ENCODE measurements at regions of chr5 and their contacts with region 1.

Region 1: GRCh38 chr5:88746438-88746882 is 136.5 kb downstream of the MEF2C start:
- DNase-seq: peak; percentile 76
- ATAC-seq: peak; percentile 87
- H3K4me3 ChIP-seq: no peak overlapping the region
- H3K27ac ChIP-seq: peak overlapping the region; percentile 76
- H3K4me1 ChIP-seq: peaks cover 23% of the 10 kb centered on the region; the same call in 1 of the 2 replicates
- H3K27me3 ChIP-seq: no peaks in the 10 kb centered on the region
- CTCF ChIP-seq: no peak
- EP300 ChIP-seq: no peak
- POLR2A ChIP-seq: no peak
- RAD21 ChIP-seq: no peak

Region 2: GRCh38 chr5:88761269-88761850 is 14.9 kb after region 1 on chr5:
- CTCF ChIA-PET with region 1: interaction called, 6 read pairs
- POLR2A ChIA-PET with region 1: interaction called, 4 read pairs
- RAD21 ChIA-PET with region 1: interaction called, 8 read pairs
- SMC1A ChIA-PET with region 1: interaction called, 30 read pairs
- in situ Hi-C with region 1: no loop called
- intact Hi-C with region 1: no loop called
- DNase-seq: no peak
- ATAC-seq: peak; percentile 67
- H3K4me3 ChIP-seq: no peak overlapping the region
- H3K27ac ChIP-seq: peak overlapping the region; percentile 17; the same call in 1 of the 2 replicates
- H3K4me1 ChIP-seq: peaks cover 11% of the 10 kb centered on the region
- H3K27me3 ChIP-seq: no peaks in the 10 kb centered on the region
- CTCF ChIP-seq: no peak
- EP300 ChIP-seq: no peak
- POLR2A ChIP-seq: no peak
- RAD21 ChIP-seq: no peak

Region 3: DNA sequence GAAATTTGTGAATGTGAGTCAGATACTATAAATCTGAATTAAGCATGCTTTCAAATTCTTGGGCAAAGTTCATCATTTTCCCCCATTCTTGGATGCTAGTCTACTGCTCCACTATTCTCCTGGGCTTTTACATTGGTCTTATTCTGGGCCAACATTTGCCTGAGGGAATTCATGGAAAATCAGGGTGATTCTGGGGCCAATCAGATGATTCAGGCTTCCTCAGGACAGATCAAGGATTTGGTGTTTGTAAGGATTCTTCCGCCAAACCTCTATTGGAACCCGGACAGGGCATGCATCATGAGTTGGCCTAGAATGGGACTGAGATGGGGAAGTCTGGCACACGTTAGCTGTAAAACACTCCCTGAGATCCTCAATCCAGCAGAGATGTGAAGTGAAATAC is 22.7 kb after region 1 on chr5:
- CTCF ChIA-PET with region 1: interaction called, 3 read pairs
- POLR2A ChIA-PET with region 1: no interaction called
- RAD21 ChIA-PET with region 1: interaction called, 4 read pairs
- SMC1A ChIA-PET with region 1: interaction called, 14 read pairs
- in situ Hi-C with region 1: no loop called
- intact Hi-C with region 1: no loop called
- DNase-seq: no peak
- ATAC-seq: no peak
- H3K4me3 ChIP-seq: no peak overlapping the region
- H3K27ac ChIP-seq: no peak overlapping the region
- H3K4me1 ChIP-seq: peaks cover 3% of the 10 kb centered on the region; the same call in 1 of the 2 replicates
- H3K27me3 ChIP-seq: no peaks in the 10 kb centered on the region
- CTCF ChIP-seq: no peak
- EP300 ChIP-seq: no peak
- POLR2A ChIP-seq: no peak
- RAD21 ChIP-seq: no peak

Region 4: GRCh38 chr5:88785391-88786219 is 39.1 kb after region 1 on chr5:
- CTCF ChIA-PET with region 1: interaction called, 3 read pairs
- POLR2A ChIA-PET with region 1: interaction called, 3 read pairs
- RAD21 ChIA-PET with region 1: interaction called, 12 read pairs
- SMC1A ChIA-PET with region 1: interaction called, 8 read pairs
- in situ Hi-C with region 1: no loop called
- intact Hi-C with region 1: no loop called
- DNase-seq: peak; percentile 43
- ATAC-seq: peak; percentile 79
- H3K4me3 ChIP-seq: 0 out of 2 replicates have a peak overlapping the region, but pooled peaks have one; percentile 11
- H3K27ac ChIP-seq: peak overlapping the region; percentile 65
- H3K4me1 ChIP-seq: peaks cover 7% of the 10 kb centered on the region; the same call in 1 of the 2 replicates
- H3K27me3 ChIP-seq: no peaks in the 10 kb centered on the region
- CTCF ChIP-seq: no peak
- EP300 ChIP-seq: peak in 1 of 2 experiments; percentile 61; a peak in 3 of 4 replicates
- POLR2A ChIP-seq: no peak
- RAD21 ChIP-seq: no peak

Region 5: GRCh38 chr5:88808153-88808552 is 61.7 kb after region 1 on chr5:
- CTCF ChIA-PET with region 1: no interaction called
- POLR2A ChIA-PET with region 1: interaction called, 4 read pairs
- RAD21 ChIA-PET with region 1: interaction called, 4 read pairs
- SMC1A ChIA-PET with region 1: interaction called, 15 read pairs
- in situ Hi-C with region 1: no loop called
- intact Hi-C with region 1: no loop called
- DNase-seq: no peak
- ATAC-seq: peak; percentile 59
- H3K4me3 ChIP-seq: no peak overlapping the region
- H3K27ac ChIP-seq: no peak overlapping the region
- H3K4me1 ChIP-seq: peaks cover 12% of the 10 kb centered on the region
- H3K27me3 ChIP-seq: no peaks in the 10 kb centered on the region
- CTCF ChIP-seq: no peak
- EP300 ChIP-seq: no peak
- POLR2A ChIP-seq: no peak
- RAD21 ChIP-seq: no peak